T-cell (primary cell): ENCODE measurements at regions of chrX and their contacts with region 1.

Region 1: DNA sequence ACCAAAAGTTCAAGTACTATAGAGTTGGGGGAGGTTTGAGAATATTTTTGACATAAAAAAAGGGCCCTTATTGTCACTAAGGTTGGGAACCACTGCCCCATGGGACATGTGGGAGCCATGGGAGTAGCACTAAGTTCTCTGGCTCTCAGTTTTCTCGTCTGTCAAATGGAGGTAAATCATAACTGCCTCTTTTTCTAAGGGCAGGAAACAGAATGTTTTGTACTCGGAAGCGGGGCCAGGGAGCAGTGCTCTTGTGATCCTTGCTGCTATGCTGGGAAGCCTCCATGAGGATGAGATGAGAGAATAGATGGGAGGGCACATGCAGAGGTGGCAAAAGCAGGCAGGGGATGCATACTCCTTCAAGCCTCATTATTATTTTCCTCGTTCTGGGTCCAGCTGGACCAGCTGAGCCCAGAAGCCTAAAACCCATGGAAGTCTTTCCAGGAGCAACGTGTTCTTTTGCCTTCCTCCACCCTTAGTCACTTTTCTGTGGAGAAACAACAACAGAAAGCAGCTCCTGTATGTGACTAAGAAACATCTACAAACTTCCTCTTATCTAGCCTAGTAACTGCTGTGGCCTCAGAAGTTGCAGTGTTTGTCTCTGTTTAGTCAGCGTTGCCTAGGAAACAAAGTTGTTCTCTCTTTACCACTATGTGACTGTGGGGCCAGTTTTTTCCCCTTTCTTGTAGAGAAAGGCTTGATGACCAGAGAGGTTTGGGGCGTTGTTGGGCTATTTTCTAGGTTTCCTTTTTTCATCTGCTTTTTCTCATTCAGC is 64.8 kb downstream of the TSC22D3 start:
- DNase-seq: peak in 30 of 35 experiments; percentile 7 to 90 (median 56)
- ATAC-seq: peak; percentile 43 to 84 (median 76)
- H3K4me3 ChIP-seq: peak overlapping the region in 1 of 2 donors; percentile 27
- H3K4me3 Mint-ChIP-seq: peak overlapping the region; percentile 66 to 89 (median 74)
- H3K27ac ChIP-seq: peak overlapping the region; percentile 99
- H3K27ac Mint-ChIP-seq: peak overlapping the region; percentile 98 to 100
- H3K4me1 ChIP-seq: peaks cover 14 to 55% of the 10 kb centered on the region in 2 experiments
- H3K4me1 Mint-ChIP-seq: peaks cover 68 to 74% (median 71%) of the 10 kb centered on the region in 3 donors
- H3K27me3 ChIP-seq: no peaks in the 10 kb centered on the region
- H3K27me3 Mint-ChIP-seq: peaks cover 0 to 6% of the 10 kb centered on the region in 2 donors

Region 2: GRCh38 chrX:107421408-107421807 is 289.4 kb before region 1 on chrX:
- CTCF ChIA-PET with region 1: no interaction called
- POLR2A ChIA-PET with region 1: no interaction called
- DNase-seq: no peak
- ATAC-seq: no peak
- H3K4me3 ChIP-seq: no peak overlapping the region
- H3K4me3 Mint-ChIP-seq: no peak overlapping the region
- H3K27ac ChIP-seq: no peak overlapping the region
- H3K27ac Mint-ChIP-seq: no peak overlapping the region
- H3K4me1 ChIP-seq: no peaks in the 10 kb centered on the region
- H3K4me1 Mint-ChIP-seq: no peaks in the 10 kb centered on the region
- H3K27me3 ChIP-seq: no peaks in the 10 kb centered on the region
- H3K27me3 Mint-ChIP-seq: peaks cover 10 to 55% of the 10 kb centered on the region in 2 donors

Region 3: GRCh38 chrX:107734646-107735045 is 23.8 kb after region 1 on chrX:
- CTCF ChIA-PET with region 1: no interaction called
- POLR2A ChIA-PET with region 1: no interaction called
- DNase-seq: no peak
- ATAC-seq: no peak
- H3K4me3 ChIP-seq: no peak overlapping the region
- H3K4me3 Mint-ChIP-seq: no peak overlapping the region
- H3K27ac ChIP-seq: no peak overlapping the region
- H3K27ac Mint-ChIP-seq: no peak overlapping the region
- H3K4me1 ChIP-seq: peaks cover 0 to 15% of the 10 kb centered on the region in 2 experiments
- H3K4me1 Mint-ChIP-seq: peaks cover 11 to 14% (median 12%) of the 10 kb centered on the region in 3 donors
- H3K27me3 ChIP-seq: no peaks in the 10 kb centered on the region
- H3K27me3 Mint-ChIP-seq: peaks cover 0 to 12% of the 10 kb centered on the region in 2 donors

Region 4: DNA sequence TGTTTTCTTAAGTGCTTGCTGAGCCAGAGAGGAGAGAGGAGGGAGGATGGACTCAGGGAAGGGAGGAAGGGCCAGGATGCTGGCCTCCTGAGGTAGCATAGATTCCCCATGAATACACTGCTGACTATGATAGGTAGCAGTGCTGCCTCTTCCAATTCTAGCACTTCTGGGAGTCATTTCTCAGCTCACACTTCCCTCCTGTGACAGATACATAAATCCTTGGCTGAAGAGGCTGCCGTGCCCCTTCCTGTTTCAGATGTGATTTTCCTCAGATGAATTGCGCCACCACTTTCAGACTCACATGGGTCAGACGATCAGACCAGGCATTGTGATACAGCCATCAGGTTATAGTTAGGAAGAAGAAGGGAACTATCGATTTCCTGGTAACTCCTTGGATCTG is 42.4 kb after region 1 on chrX:
- CTCF ChIA-PET with region 1: no interaction called
- POLR2A ChIA-PET with region 1: interaction called in 1 of 2 experiments, 10 read pairs
- DNase-seq: no peak
- ATAC-seq: no peak
- H3K4me3 ChIP-seq: no peak overlapping the region
- H3K4me3 Mint-ChIP-seq: no peak overlapping the region
- H3K27ac ChIP-seq: no peak overlapping the region
- H3K27ac Mint-ChIP-seq: no peak overlapping the region
- H3K4me1 ChIP-seq: no peaks in the 10 kb centered on the region
- H3K4me1 Mint-ChIP-seq: peaks cover 16 to 26% (median 23%) of the 10 kb centered on the region in 3 donors
- H3K27me3 ChIP-seq: no peaks in the 10 kb centered on the region
- H3K27me3 Mint-ChIP-seq: no peaks in the 10 kb centered on the region